ENCODE measurements at regions of chr17 and their contacts with region 1.

Region 1: GRCh38 chr17:75430159-75430974 is 24.9 kb upstream of the GRB2 start:
- DNase-seq: peak in 1 of 2 donors; percentile 58
- H3K4me3 ChIP-seq: no peak overlapping the region
- H3K27ac ChIP-seq: peak overlapping the region in 3 of 5 donors; percentile 46 to 73 (median 46)
- H3K4me1 ChIP-seq: peaks cover 7 to 36% (median 18%) of the 10 kb centered on the region in 4 donors
- H3K27me3 ChIP-seq: no peaks in the 10 kb centered on the region
- CTCF ChIP-seq: no peak
- EP300 ChIP-seq: no peak
- POLR2A ChIP-seq: no peak

Region 2: GRCh38 chr17:75504347-75504964 is 74.1 kb after region 1 on chr17:
- intact Hi-C with region 1: loop called (anchors 10 kb)
- DNase-seq: peak; percentile 66 to 68
- H3K4me3 ChIP-seq: no peak overlapping the region
- H3K27ac ChIP-seq: peak overlapping the region in 2 of 5 donors; percentile 13 to 32
- H3K4me1 ChIP-seq: peaks cover 10 to 51% (median 22%) of the 10 kb centered on the region in 4 donors
- H3K27me3 ChIP-seq: no peaks in the 10 kb centered on the region
- CTCF ChIP-seq: peak in 5 of 7 experiments; percentile 44 to 80 (median 57)
- EP300 ChIP-seq: no peak
- POLR2A ChIP-seq: no peak

Region 3: GRCh38 chr17:75589012-75589918 is 158.9 kb after region 1 on chr17:
- intact Hi-C with region 1: loop called (anchors 10 kb)
- DNase-seq: peak; percentile 96 to 97
- H3K4me3 ChIP-seq: peak overlapping the region; percentile 60 to 68 (median 64)
- H3K27ac ChIP-seq: peak overlapping the region; percentile 87 to 98 (median 91)
- H3K4me1 ChIP-seq: peaks cover 24 to 40% (median 32%) of the 10 kb centered on the region in 4 donors
- H3K27me3 ChIP-seq: no peaks in the 10 kb centered on the region
- CTCF ChIP-seq: peak in 5 of 7 experiments; percentile 6 to 91 (median 79)
- EP300 ChIP-seq: no peak
- POLR2A ChIP-seq: no peak

Measured in stomach (tissue), 19 donors.